ENCODE measurements at regions of chr1 and their contacts with region 1.

Region 1: DNA sequence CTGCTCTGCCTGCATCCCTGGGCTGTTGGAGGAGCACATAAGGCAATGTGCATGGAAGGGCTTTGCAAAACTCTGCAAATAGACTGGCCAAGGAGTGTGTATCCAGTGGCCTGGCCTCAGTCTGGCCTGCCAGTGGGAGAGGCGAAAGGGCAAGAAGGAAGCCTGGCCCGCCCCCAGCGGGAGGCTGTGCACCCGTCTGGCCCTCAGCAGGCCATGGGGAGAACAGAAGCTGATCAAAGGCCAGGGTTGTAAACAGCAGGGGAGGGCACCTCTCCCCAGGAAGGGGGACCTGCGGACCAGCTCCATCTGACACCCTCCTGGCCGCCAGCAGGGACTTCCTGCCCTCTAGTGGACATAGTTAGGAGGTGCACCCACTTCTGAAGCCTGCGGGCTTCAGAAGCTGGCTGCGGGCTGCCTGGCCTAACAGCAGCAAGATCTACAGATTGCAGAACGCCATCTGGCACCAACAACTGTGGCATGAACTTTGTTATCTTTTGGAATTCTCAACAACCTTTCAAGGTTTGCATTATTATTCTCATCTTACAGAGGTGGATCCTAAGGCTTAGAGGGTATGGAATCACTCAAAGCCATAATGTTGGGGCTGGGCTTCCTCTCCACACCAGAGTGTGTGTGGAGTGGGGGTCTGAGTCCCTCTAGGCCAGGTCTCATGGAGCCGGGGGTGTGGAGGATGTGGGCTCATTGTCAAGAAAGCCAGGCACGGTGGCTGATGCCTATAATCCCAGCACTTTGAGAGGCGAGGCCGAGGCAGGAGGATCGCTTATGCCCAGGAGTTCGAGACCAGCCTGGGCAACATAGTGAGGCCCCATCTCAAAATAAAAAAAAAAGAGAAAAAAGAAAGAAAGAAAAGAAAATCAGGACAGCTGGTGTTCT is 18.9 kb upstream of the CDK18 start:
- DNase-seq: peak; percentile 75
- H3K4me3 Mint-ChIP-seq: peak overlapping the region; percentile 25
- H3K27ac Mint-ChIP-seq: no peak overlapping the region
- H3K4me1 Mint-ChIP-seq: peaks cover 10% of the 10 kb centered on the region
- H3K27me3 Mint-ChIP-seq: peaks cover 22% of the 10 kb centered on the region

Region 2: DNA sequence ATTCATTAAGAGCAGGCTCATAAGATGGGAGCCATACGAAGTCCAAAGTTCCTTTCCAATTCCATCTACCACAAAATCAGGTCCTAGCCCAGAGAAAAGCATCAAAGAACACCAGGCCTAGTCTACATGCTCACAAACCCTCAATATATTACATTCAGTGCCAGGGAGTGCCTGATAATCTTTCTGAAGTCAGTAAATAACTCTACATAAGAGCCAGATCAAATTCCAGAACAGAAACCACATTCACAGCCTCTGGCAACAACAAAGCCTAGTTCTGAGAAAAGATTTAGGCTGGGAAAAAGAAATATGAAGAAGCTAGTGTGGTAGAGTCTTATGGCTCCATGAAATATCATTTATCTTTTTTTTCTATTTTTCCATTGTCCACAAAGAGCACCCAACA is 323.3 kb before region 1 on chr1:
- CTCF ChIA-PET with region 1: no interaction called
- POLR2A ChIA-PET with region 1: no interaction called
- intact Hi-C with region 1: no loop called
- DNase-seq: no peak
- H3K4me3 Mint-ChIP-seq: no peak overlapping the region
- H3K27ac Mint-ChIP-seq: no peak overlapping the region
- H3K4me1 Mint-ChIP-seq: no peaks in the 10 kb centered on the region
- H3K27me3 Mint-ChIP-seq: no peaks in the 10 kb centered on the region

Region 3: DNA sequence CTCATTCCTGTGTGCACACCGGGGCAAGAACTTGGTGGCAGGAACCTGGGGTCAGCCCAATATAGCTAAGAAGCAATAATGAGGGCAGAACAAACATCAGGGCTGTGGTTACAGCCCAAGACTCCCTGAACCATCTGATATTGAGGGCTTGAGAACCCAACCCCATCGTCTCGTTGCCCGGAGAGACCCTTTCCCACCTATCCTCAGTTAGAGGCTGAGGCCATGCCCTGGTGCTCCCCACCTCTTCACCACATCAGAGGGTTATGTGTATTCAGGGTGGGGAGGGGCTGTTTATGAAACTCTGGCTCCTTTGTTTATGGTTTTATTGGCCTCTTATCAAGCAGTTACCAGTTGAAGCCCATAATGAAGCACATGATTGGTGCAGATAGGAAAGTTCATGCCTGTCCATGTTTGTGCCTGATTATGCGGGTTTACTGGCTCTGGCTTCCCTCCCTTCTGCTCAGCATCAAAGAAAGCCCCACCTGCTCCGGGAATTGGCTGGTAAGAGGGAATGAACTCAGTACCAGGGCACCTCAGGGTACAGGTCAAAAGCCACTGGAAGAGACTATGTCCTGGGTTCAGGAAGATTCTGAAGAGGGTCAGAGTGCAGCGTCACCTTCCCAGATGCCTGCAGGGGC is 178.5 kb before region 1 on chr1:
- CTCF ChIA-PET with region 1: no interaction called
- POLR2A ChIA-PET with region 1: no interaction called
- intact Hi-C with region 1: no loop called
- DNase-seq: no peak
- H3K4me3 Mint-ChIP-seq: no peak overlapping the region
- H3K27ac Mint-ChIP-seq: no peak overlapping the region
- H3K4me1 Mint-ChIP-seq: peaks cover 34% of the 10 kb centered on the region
- H3K27me3 Mint-ChIP-seq: no peaks in the 10 kb centered on the region

Region 4: DNA sequence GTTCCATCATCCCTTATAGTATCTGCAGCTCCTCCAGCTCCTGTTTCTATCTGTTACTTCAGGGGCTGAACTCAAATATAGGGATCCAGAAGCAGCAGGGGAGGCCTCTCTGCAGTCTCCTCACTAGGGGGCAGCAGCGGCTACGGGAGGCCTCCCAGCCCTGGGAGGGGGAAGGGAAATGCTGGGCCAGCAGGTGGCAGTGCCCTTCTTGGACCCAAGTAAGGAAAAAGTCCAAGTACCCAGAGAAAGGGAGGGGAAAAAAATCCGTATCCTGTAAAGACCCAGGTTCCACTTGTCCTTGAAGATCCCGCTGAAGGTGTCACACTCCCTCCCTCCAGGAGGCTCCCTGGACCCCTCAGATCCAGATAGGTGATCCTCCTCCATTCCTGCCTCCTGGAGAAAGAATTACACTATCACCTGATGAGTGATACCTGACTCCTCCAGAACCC is 149.9 kb before region 1 on chr1:
- CTCF ChIA-PET with region 1: interaction called, 38 read pairs
- POLR2A ChIA-PET with region 1: interaction called, 3 read pairs
- intact Hi-C with region 1: loop called (anchors 5 kb)
- DNase-seq: peak; percentile 89
- H3K4me3 Mint-ChIP-seq: no peak overlapping the region
- H3K27ac Mint-ChIP-seq: no peak overlapping the region
- H3K4me1 Mint-ChIP-seq: peaks cover 3% of the 10 kb centered on the region
- H3K27me3 Mint-ChIP-seq: no peaks in the 10 kb centered on the region

Region 5: DNA sequence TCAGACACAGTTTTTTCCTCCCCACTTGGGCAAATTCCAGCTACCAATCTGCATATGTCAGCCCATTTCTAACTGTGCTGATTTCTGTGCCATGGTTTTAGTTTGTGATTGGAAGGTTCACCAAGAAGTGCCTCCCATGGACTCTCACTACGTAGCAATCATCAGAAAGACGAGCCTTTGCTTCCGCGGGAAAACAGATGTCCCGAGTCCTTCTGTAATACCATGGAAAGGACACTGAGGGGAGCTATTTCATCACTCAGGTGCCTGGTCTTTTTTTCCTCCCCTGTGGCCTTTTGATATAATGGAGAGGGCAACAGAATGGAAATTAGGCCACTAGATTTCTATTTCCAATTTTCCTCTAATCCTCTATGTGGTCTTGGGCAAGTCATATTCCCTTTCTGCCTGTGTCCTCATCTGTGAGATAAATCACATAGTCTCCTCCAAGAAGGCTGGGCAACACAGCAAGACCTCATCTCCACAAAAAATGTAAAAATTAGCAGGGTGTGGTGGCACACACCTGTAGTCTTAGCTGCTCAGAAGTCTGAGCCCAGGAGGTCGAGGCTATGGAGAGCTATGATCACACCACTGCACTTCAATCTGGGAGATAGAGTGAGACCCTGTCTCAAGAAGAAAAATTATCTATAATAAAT is 88.5 kb before region 1 on chr1:
- CTCF ChIA-PET with region 1: interaction called, 201 read pairs
- POLR2A ChIA-PET with region 1: interaction called, 3 read pairs
- intact Hi-C with region 1: loop called (anchors 1 kb)
- DNase-seq: peak; percentile 27
- H3K4me3 Mint-ChIP-seq: no peak overlapping the region
- H3K27ac Mint-ChIP-seq: no peak overlapping the region
- H3K4me1 Mint-ChIP-seq: no peaks in the 10 kb centered on the region
- H3K27me3 Mint-ChIP-seq: peaks cover 6% of the 10 kb centered on the region

Region 6: DNA sequence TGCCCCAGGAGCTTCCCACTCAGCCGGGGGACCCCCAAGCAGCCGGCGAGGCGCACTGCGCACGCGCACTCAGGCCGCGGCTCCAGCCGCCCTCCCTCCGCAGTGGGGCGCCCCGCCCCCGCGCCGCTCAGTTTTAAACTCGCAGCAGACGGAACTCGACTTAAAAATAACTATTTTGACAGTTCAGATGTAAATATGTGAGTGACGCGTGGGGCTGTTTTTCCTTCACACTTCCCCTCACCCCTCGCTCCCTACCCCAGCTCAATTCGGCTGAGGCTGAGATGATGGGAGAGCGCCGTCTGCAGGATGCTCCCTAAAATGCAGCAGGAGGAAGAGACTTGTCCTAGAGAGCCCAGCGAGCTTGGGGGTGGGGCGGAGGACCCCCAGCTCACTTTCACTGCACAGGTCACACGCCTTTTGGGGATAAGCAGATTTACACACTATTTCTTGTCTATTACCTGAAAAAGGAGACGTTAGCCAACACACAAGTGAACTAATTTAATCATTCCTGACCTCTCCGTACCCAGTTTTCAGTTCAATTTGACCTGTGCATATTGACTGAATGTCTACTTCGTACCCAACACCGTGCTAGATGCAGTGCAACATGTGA is 54.8 kb before region 1 on chr1:
- CTCF ChIA-PET with region 1: interaction called, 44 read pairs
- POLR2A ChIA-PET with region 1: no interaction called
- intact Hi-C with region 1: no loop called
- DNase-seq: peak; percentile 73
- H3K4me3 Mint-ChIP-seq: peak overlapping the region; percentile 76
- H3K27ac Mint-ChIP-seq: no peak overlapping the region
- H3K4me1 Mint-ChIP-seq: peaks cover 10% of the 10 kb centered on the region
- H3K27me3 Mint-ChIP-seq: peaks cover 14% of the 10 kb centered on the region

Region 7: GRCh38 chr1:205466595-205467181 is 18.9 kb before region 1 on chr1:
- CTCF ChIA-PET with region 1: interaction called, 75 read pairs
- POLR2A ChIA-PET with region 1: no interaction called
- intact Hi-C with region 1: no loop called
- DNase-seq: no peak
- H3K4me3 Mint-ChIP-seq: no peak overlapping the region
- H3K27ac Mint-ChIP-seq: no peak overlapping the region
- H3K4me1 Mint-ChIP-seq: no peaks in the 10 kb centered on the region
- H3K27me3 Mint-ChIP-seq: peaks cover 15% of the 10 kb centered on the region

Region 8: DNA sequence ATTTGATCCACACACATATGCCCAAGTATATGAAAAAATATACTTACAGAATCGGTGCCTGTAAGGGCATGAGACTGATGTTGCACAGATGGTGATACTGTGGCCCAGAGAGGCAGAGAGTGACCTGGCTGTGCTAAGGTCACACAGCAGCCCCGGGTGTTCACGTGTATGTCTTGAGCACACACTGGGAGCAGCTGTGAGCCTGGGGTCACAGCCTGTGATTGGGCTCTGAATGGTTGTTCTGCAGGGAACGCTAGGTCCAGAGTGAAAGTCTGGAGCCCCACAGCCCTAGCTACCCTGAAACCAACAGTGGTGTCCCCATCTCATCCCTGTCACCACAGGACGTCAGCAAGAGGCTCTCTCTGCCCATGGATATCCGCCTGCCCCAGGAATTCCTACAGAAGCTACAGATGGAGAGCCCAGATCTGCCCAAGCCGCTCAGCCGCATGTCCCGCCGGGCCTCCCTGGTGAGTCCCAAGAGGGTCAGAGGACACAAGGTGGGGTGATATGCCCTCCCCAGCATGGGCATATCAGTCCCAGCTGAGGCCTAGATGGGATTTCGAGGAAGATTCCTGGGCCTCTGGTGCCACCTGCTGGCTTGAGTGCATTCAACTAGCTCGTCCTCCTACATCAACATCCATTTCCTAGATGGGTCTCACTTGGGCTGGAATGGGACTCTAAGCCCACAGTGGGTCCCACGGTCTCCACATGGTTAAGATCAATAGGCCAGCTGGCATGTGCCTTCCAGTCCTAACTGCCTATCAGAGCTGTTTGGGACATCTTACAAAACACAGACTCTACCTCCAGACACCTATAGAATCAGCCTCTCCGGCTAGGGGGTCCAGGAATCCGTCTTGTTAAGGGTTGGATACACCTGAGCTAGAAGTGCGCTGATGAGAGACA is 38.6 kb after region 1 on chr1:
- CTCF ChIA-PET with region 1: interaction called, 321 read pairs
- POLR2A ChIA-PET with region 1: interaction called, 8 read pairs
- intact Hi-C with region 1: loop called (anchors 1 kb)
- DNase-seq: peak; percentile 82
- H3K4me3 Mint-ChIP-seq: no peak overlapping the region
- H3K27ac Mint-ChIP-seq: no peak overlapping the region
- H3K4me1 Mint-ChIP-seq: no peaks in the 10 kb centered on the region
- H3K27me3 Mint-ChIP-seq: peaks cover 2% of the 10 kb centered on the region

Region 9: DNA sequence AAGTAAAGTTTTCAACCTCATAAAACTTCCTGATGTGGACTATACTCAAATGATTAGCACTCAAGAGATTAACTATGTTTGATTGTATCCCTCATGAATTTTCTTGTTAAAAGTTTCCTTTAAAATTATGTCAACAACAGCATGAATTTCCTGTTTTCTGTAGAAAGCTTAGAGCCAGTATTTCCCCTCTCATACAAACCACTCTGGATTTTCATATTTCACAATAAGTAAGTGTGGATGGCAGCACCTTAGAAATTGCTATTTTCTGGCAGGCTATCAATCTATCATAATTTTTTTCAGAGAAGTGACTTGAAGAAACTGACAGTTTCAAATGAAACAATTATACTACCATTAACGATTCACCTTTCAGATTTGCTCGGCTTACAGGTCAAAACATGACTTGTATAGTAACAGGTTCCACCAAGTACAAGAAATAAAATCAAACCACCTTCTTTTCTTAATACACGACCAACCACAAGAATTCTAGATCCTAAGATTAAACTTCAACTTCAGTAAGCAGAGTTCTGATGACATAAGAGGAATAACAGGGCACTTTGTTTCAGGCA is 125.4 kb after region 1 on chr1:
- CTCF ChIA-PET with region 1: no interaction called
- POLR2A ChIA-PET with region 1: no interaction called
- intact Hi-C with region 1: no loop called
- DNase-seq: no peak
- H3K4me3 Mint-ChIP-seq: peak overlapping the region; percentile 13
- H3K27ac Mint-ChIP-seq: peak overlapping the region; percentile 75
- H3K4me1 Mint-ChIP-seq: peaks cover 44% of the 10 kb centered on the region
- H3K27me3 Mint-ChIP-seq: no peaks in the 10 kb centered on the region